GM10248 (cell line): ENCODE measurements at regions of chr13 and their contacts with region 1.

Region 1: DNA sequence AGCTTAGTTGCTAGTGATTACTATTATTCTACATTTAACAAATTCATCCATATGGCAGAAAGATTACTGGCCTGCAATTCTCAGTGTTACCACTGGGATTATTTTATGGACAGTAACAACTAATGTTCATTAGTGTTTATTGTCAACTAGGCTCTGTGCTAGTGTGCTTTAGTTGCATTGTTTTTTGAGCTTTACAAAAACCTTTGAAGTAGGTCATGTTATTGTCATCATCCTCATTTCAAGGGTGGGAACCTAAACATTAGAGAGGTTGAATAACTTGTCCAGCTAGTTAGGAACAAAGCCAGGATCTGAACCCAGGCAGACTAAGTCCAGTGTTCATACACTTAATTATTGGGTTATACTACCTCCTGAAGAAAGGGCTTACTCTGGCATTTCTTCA is 27.8 kb upstream of the TDRD3 start:
- DNase-seq: no peak
- CTCF ChIP-seq: no peak

Region 2: GRCh38 chr13:60351326-60351725 is 17.9 kb before region 1 on chr13:
- CTCF ChIA-PET with region 1: interaction called, 13 read pairs
- POLR2A ChIA-PET with region 1: no interaction called
- DNase-seq: no peak
- CTCF ChIP-seq: no peak

Region 3: GRCh38 chr13:60538566-60538965 is 169.3 kb after region 1 on chr13:
- CTCF ChIA-PET with region 1: no interaction called
- POLR2A ChIA-PET with region 1: no interaction called
- DNase-seq: no peak
- CTCF ChIP-seq: no peak